ENCODE measurements at regions of chr3 and their contacts with region 1.

Region 1: DNA sequence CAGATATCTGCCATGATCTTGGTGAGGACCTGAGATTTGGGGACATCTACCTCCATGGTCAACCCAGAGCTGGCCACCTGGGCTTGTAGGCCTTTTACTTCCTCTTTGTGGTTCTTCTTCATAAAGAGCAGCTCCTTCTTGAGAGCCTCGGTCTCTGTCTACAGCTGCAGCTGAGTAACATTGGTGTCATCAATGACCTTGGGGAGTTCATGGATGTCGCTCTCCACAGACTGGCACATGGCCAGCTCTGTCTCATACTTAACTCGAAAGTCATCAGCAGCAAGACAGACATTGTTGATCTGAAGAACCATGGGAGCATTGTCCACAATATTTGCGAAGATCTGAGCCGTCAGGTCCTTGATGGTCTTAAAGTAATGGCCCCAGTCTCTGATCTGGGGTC is 15.7 kb upstream of the RASA2 start:
- DNase-seq: no peak
- ATAC-seq: peak; percentile 14
- H3K4me3 ChIP-seq: no peak overlapping the region
- H3K4me3 Mint-ChIP-seq: no peak overlapping the region
- H3K27ac ChIP-seq: no peak overlapping the region
- H3K27ac Mint-ChIP-seq: no peak overlapping the region
- H3K4me1 ChIP-seq: peaks cover 0 to 4% of the 10 kb centered on the region in 2 donors
- H3K4me1 Mint-ChIP-seq: peaks cover 8% of the 10 kb centered on the region
- H3K27me3 ChIP-seq: no peaks in the 10 kb centered on the region
- H3K27me3 Mint-ChIP-seq: no peaks in the 10 kb centered on the region
- CTCF ChIP-seq: no peak

Region 2: GRCh38 chr3:141511361-141511760 is 40.2 kb after region 1 on chr3:
- CTCF ChIA-PET with region 1: interaction called, 3 read pairs
- POLR2A ChIA-PET with region 1: no interaction called
- intact Hi-C with region 1: loop called (anchors 5 kb)
- DNase-seq: no peak
- ATAC-seq: no peak
- H3K4me3 ChIP-seq: no peak overlapping the region
- H3K4me3 Mint-ChIP-seq: no peak overlapping the region
- H3K27ac ChIP-seq: no peak overlapping the region
- H3K27ac Mint-ChIP-seq: no peak overlapping the region
- H3K4me1 ChIP-seq: peaks cover 3 to 10% of the 10 kb centered on the region in 2 donors
- H3K4me1 Mint-ChIP-seq: peaks cover 37% of the 10 kb centered on the region
- H3K27me3 ChIP-seq: no peaks in the 10 kb centered on the region
- H3K27me3 Mint-ChIP-seq: no peaks in the 10 kb centered on the region
- CTCF ChIP-seq: no peak

Region 3: GRCh38 chr3:141769221-141769894 is 298.2 kb after region 1 on chr3:
- CTCF ChIA-PET with region 1: no interaction called
- POLR2A ChIA-PET with region 1: no interaction called
- intact Hi-C with region 1: no loop called
- DNase-seq: no peak
- ATAC-seq: no peak
- H3K4me3 ChIP-seq: no peak overlapping the region
- H3K4me3 Mint-ChIP-seq: no peak overlapping the region
- H3K27ac ChIP-seq: no peak overlapping the region
- H3K27ac Mint-ChIP-seq: no peak overlapping the region
- H3K4me1 ChIP-seq: no peaks in the 10 kb centered on the region
- H3K4me1 Mint-ChIP-seq: no peaks in the 10 kb centered on the region
- H3K27me3 ChIP-seq: no peaks in the 10 kb centered on the region
- H3K27me3 Mint-ChIP-seq: peaks cover 5% of the 10 kb centered on the region
- CTCF ChIP-seq: no peak

Measured in B cell (primary cell).